Naive thymus-derived CD4-positive, alpha-beta T cell (primary cell): ENCODE measurements at regions of chr2 and their contacts with region 1.

Region 1: GRCh38 chr2:175136334-175137215 is 31.4 kb downstream of the ATF2 start:
- DNase-seq: no peak
- ATAC-seq: no peak
- H3K4me3 ChIP-seq: no peak overlapping the region
- H3K4me3 Mint-ChIP-seq: no peak overlapping the region
- H3K27ac ChIP-seq: no peak overlapping the region
- H3K27ac Mint-ChIP-seq: no peak overlapping the region
- H3K4me1 ChIP-seq: no peaks in the 10 kb centered on the region
- H3K4me1 Mint-ChIP-seq: peaks cover 7 to 53% (median 33%) of the 10 kb centered on the region in 7 donors
- H3K27me3 ChIP-seq: no peaks in the 10 kb centered on the region
- H3K27me3 Mint-ChIP-seq: no peaks in the 10 kb centered on the region

Region 2: DNA sequence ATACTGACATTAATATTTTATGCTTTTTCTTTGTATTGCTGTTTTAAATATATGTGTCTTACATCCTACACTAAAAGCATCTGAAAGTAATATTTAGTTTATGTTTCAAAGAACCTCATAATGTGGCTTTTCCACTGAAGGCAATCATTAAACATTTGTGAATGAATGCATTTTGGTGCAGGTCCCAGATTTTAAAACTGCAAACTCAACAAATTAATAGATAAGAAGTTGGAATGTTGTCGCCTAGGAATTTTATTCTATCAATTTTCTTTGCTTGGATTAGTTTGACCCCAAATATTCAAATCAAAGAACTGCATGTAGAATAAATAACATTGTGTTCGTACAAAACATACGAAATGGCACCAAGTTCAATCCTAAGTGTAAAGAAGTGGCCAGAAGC is 13.3 kb before region 1 on chr2:
- CTCF ChIA-PET with region 1: no interaction called
- POLR2A ChIA-PET with region 1: no interaction called
- intact Hi-C with region 1: loop called in 1 of 2 experiments (anchors 2 kb)
- DNase-seq: no peak
- ATAC-seq: no peak
- H3K4me3 ChIP-seq: no peak overlapping the region
- H3K4me3 Mint-ChIP-seq: no peak overlapping the region
- H3K27ac ChIP-seq: no peak overlapping the region
- H3K27ac Mint-ChIP-seq: peak overlapping the region in 3 of 9 donors; percentile 5 to 47 (median 6)
- H3K4me1 ChIP-seq: no peaks in the 10 kb centered on the region
- H3K4me1 Mint-ChIP-seq: peaks cover 7 to 31% (median 23%) of the 10 kb centered on the region in 7 donors
- H3K27me3 ChIP-seq: no peaks in the 10 kb centered on the region
- H3K27me3 Mint-ChIP-seq: no peaks in the 10 kb centered on the region

Region 3: DNA sequence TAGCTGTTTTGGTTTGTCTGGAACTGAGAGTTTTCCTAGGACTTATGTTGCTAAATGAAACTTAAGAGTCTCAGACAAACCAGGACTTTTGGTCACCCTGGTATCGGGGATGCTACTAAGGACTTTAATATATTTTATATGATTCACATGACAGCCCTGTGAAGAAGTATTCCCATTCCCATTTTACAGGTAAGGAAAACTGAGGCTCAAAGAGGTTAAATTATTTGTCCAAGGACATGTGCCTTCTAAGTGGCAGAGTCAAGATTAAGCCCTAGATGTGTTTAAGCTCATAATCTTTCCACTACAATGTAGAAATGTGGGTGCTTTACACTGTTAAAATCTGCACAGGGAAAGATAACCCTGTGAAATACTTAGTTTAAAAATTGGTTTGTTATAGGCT is 122.6 kb after region 1 on chr2:
- CTCF ChIA-PET with region 1: no interaction called
- POLR2A ChIA-PET with region 1: no interaction called
- intact Hi-C with region 1: no loop called
- DNase-seq: no peak
- ATAC-seq: no peak
- H3K4me3 ChIP-seq: no peak overlapping the region
- H3K4me3 Mint-ChIP-seq: no peak overlapping the region
- H3K27ac ChIP-seq: no peak overlapping the region
- H3K27ac Mint-ChIP-seq: no peak overlapping the region
- H3K4me1 ChIP-seq: no peaks in the 10 kb centered on the region
- H3K4me1 Mint-ChIP-seq: no peaks in the 10 kb centered on the region
- H3K27me3 ChIP-seq: no peaks in the 10 kb centered on the region
- H3K27me3 Mint-ChIP-seq: peaks cover 13 to 29% (median 24%) of the 10 kb centered on the region in 5 donors